Left ventricle myocardium inferior (tissue), 1 donor: ENCODE measurements at regions of chr9 and their contacts with region 1.

Region 1: DNA sequence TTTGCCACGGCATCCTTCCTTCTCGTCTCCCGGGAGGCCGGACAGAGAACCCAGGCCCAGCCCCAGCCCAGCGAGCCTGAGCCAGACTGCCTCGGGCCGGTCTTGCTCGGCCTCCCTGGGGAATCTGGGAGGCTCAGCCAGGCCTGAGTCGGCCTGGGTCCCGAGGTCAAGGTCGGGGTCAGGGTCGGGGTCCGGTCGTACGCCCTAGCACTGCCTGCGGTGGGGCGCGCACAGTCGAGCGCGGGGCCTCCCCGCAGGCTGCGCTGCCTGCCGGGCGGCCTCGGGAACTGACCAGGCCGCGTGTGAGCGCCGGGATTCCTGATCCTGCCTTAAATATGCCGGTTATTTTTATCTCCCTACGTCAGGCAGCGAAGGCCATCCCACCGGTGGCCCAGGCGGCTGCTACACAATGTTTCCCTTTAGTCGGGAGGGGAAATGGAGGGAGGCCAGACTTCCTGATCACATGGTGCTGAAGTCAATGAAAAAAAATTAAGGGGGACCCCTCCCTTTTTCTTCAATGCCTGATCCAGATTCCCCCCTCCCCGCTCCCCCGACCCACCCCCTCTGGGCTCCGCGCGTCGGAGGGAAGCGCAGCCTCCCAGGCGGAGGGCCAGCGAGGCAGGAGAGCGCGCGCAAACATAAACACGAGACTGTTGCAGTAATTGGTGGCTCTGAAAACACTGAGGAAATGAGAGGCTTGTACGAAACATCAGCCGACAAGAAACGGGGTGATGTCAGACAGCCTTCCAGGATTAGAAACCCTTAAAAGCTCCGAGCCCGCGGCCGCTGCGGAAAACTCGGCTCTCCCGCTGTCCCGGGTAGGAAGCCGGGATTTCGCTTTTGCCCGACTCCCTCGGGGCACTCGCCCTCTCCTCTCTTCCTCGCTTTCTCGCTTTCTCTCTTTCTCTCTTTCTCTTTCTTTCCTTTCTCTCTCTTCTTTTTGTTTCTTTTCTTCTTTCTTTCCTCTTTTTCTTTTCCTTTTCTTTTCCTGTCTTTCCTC is 148.2 kb upstream of the KLF4 start:
- DNase-seq: peak; percentile 88
- H3K4me3 ChIP-seq: peak overlapping the region; percentile 61
- H3K27ac ChIP-seq: peak overlapping the region; percentile 98
- H3K4me1 ChIP-seq: peaks cover 23% of the 10 kb centered on the region
- H3K27me3 ChIP-seq: no peaks in the 10 kb centered on the region
- CTCF ChIP-seq: peak; percentile 53

Region 2: GRCh38 chr9:107489687-107490605 is 147.8 kb before region 1 on chr9 and contains the start of gene KLF4:
- intact Hi-C with region 1: loop called (anchors 5 kb)
- DNase-seq: peak; percentile 92
- H3K4me3 ChIP-seq: peak within 1 kb of the TSS; percentile 77
- H3K27ac ChIP-seq: peak within 1 kb of the TSS; percentile 98
- H3K4me1 ChIP-seq: peaks cover 62% of the 10 kb centered on the region
- H3K27me3 ChIP-seq: no peaks in the 10 kb centered on the region
- CTCF ChIP-seq: no peak
- total RNA-seq, gene KLF4: 28.0 TPM

Region 3: GRCh38 chr9:107749787-107750444 is 112.2 kb after region 1 on chr9:
- intact Hi-C with region 1: loop called (anchors 5 kb)
- DNase-seq: peak; percentile 89
- H3K4me3 ChIP-seq: no peak overlapping the region
- H3K27ac ChIP-seq: peak overlapping the region; percentile 82
- H3K4me1 ChIP-seq: peaks cover 43% of the 10 kb centered on the region
- H3K27me3 ChIP-seq: no peaks in the 10 kb centered on the region
- CTCF ChIP-seq: no peak

Region 4: DNA sequence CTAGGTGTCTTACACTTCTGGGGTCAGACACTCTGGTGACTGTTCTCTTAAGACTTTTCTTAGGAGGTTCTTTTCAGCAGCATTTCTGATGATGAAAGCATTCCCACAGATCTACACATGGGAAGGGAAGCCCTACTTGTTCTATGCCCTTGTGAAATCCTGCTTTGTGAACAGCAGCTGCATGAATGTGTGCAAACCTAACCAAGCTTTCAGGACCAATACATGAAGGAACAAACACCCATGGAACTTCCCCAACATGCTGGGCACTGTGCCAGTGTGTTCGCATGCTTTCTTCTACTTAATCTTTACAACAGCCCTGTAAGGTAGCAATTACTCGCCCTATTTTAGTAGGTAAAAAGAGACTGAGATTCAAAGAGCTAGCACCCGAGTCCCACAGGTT is 291.7 kb after region 1 on chr9:
- intact Hi-C with region 1: no loop called
- DNase-seq: peak; percentile 70
- H3K4me3 ChIP-seq: no peak overlapping the region
- H3K27ac ChIP-seq: no peak overlapping the region
- H3K4me1 ChIP-seq: peaks cover 4% of the 10 kb centered on the region
- H3K27me3 ChIP-seq: peaks cover 7% of the 10 kb centered on the region
- CTCF ChIP-seq: no peak